Activated naive CD4-positive, alpha-beta T cell treated with anti-CD3 and anti-CD28 coated beads for 36 hours (primary cell): ENCODE measurements at regions of chr9 and their contacts with region 1.

Region 1: DNA sequence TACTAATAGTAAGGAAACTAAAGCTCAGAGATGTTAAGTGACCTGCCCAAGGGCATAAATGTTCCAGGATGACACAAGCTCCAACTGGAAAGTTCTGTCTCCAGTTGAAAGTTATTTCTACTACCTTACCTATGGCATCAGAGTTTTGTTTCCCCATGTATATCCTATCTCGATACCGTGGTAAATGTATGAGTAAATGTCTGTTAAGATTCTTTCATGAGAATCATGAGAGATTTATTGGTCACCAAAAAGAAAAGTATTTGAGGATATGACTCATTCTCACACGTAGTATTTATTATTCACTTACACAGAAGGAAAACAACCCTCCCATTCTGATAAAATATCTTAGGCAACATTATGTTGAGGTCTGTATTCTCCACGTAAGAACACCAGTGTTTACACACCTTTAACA is 11.1 kb upstream of the SHOC1 start:
- DNase-seq: no peak
- H3K4me3 Mint-ChIP-seq: no peak overlapping the region
- H3K27ac Mint-ChIP-seq: no peak overlapping the region
- H3K4me1 Mint-ChIP-seq: peaks cover 32% of the 10 kb centered on the region
- H3K27me3 Mint-ChIP-seq: no peaks in the 10 kb centered on the region

Region 2: DNA sequence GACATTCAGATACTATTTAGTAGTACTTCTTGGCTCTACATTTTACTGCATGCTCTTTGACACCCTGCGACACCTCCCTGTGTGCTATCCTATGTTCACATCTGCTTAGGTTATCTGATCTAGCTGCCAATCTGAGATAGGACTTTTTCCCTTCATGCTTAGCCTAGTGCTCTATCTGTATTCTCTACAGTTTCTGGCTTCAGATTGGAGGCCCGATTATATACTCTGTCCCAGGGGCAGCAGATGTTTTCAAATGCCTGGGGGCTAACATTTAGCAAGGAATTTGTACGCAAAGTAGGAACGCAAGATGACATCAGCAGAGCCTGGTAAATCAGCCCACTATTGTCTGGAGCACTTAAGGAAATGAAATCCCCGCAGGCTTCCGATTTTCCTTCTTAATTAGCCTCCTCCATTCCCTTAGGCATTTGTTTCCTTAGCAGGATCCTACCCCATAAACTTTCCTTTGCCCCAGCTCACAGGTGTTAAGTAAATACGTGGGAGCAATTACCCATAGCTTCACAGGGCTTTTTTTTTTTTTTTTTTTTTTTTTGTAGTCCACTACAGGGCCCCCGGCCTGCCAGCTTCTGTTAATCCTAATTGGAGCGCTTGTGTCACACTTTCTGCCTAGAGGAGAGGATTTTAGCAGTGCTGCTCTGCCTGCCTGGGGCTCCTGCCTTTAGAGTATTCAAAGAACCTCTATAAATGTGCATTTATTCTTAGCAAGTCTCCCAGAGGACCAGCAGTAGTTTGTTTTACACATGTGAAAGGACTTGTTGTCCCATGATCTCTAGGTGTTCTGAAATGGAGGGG is 706.4 kb before region 1 on chr9:
- CTCF ChIA-PET with region 1: no interaction called
- intact Hi-C with region 1: no loop called
- DNase-seq: no peak
- H3K4me3 Mint-ChIP-seq: no peak overlapping the region
- H3K27ac Mint-ChIP-seq: no peak overlapping the region
- H3K4me1 Mint-ChIP-seq: no peaks in the 10 kb centered on the region
- H3K27me3 Mint-ChIP-seq: no peaks in the 10 kb centered on the region

Region 3: GRCh38 chr9:112031400-112031799 is 225.6 kb after region 1 on chr9:
- CTCF ChIA-PET with region 1: no interaction called
- intact Hi-C with region 1: no loop called
- DNase-seq: no peak
- H3K4me3 Mint-ChIP-seq: no peak overlapping the region
- H3K27ac Mint-ChIP-seq: no peak overlapping the region
- H3K4me1 Mint-ChIP-seq: peaks cover 42% of the 10 kb centered on the region
- H3K27me3 Mint-ChIP-seq: peaks cover 4% of the 10 kb centered on the region

Region 4: DNA sequence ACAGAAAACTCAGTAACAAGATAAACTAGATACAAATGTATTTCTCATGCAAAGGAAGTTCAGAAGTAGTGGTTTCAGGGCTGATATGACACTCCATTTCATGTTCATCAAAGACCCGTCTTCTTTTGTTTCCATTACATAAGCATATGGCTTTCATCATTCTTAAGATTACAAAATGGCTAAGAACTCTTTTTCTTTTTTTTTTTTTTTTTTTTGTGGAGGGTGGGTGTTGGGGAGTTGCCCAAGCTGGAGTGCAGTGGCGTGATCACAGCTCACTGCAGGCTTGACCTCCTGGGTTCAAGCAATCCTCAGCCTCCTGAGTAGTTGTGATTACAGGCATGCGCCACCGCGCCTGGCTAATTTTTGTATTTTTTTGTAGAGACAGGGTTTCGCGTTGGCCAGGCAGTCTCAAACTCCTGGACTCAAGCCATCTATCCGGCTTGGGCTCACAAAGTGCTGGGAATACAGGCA is 549.6 kb after region 1 on chr9:
- CTCF ChIA-PET with region 1: no interaction called
- intact Hi-C with region 1: loop called (anchors 1 kb)
- DNase-seq: peak; percentile 18
- H3K4me3 Mint-ChIP-seq: no peak overlapping the region
- H3K27ac Mint-ChIP-seq: peak overlapping the region; percentile 34
- H3K4me1 Mint-ChIP-seq: peaks cover 31% of the 10 kb centered on the region
- H3K27me3 Mint-ChIP-seq: no peaks in the 10 kb centered on the region